PC-9 (cell line): ENCODE measurements at regions of chr22 and their contacts with region 1.

Region 1: DNA sequence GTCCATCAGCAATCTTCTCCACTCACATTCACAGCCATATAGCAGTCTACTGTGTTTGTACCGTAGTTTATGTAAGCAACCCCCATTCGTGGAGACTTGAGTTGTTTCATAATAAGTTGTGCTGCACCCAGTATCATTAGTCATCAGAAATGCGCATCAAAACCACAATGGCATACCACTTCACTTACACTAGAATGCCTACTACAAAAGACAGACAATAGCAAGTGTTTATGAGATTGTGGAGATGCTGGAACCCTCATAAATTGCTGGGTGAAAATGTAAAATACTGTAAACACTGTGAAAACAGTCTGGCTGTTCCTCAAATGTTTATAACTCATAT is 133.3 kb downstream of the ATXN10 start:
- DNase-seq: peak; percentile 55 to 98
- H3K4me3 ChIP-seq: no peak overlapping the region
- H3K27ac ChIP-seq: peak overlapping the region; percentile 55
- H3K4me1 ChIP-seq: peaks cover 30% of the 10 kb centered on the region
- H3K27me3 ChIP-seq: no peaks in the 10 kb centered on the region
- CTCF ChIP-seq: no peak

Region 2: DNA sequence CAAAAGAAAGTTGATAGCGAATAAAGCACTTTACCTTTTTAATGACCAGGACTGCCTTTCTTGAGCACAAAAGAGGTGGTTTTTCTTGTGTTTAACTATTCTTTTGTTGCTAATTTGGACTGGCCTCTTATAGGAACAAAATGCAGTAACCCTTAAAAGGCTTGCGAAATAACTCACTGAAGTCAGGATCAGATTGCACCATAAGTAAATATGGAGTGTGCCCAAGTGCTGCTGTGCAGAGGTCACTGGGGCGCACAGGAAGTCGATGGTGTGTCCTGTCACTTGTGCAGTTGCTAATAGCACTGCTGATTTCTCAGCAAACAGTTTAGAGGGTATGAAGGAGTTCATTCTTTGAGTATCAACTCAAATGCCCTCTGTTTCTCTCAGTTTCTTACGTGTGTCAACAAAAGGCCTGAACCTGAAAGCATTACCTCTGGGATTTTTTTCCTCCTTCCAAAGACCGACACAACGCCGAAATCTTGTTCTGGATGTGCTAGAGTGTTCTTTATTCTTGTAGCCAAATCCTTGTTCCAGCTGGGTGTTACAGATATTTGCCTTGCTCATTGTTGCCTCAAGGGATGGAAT is 62.0 kb before region 1 on chr22:
- CTCF ChIA-PET with region 1: no interaction called
- POLR2A ChIA-PET with region 1: no interaction called
- intact Hi-C with region 1: loop called (anchors 1 kb)
- DNase-seq: peak; percentile 56 to 93
- H3K4me3 ChIP-seq: peak overlapping the region; percentile 8; the same call in 1 of the 2 replicates
- H3K27ac ChIP-seq: peak overlapping the region; percentile 93
- H3K4me1 ChIP-seq: peaks cover 66% of the 10 kb centered on the region
- H3K27me3 ChIP-seq: no peaks in the 10 kb centered on the region
- CTCF ChIP-seq: no peak

Region 3: GRCh38 chr22:45785458-45785857 is 19.5 kb before region 1 on chr22:
- CTCF ChIA-PET with region 1: no interaction called
- POLR2A ChIA-PET with region 1: no interaction called
- intact Hi-C with region 1: loop called (anchors 2 kb)
- DNase-seq: peak; percentile 60 to 95
- H3K4me3 ChIP-seq: no peak overlapping the region
- H3K27ac ChIP-seq: peak overlapping the region; percentile 56
- H3K4me1 ChIP-seq: peaks cover 31% of the 10 kb centered on the region
- H3K27me3 ChIP-seq: no peaks in the 10 kb centered on the region
- CTCF ChIP-seq: no peak

Region 4: GRCh38 chr22:45968751-45969413 is 163.9 kb after region 1 on chr22:
- CTCF ChIA-PET with region 1: no interaction called
- POLR2A ChIA-PET with region 1: no interaction called
- intact Hi-C with region 1: loop called (anchors 1 kb)
- DNase-seq: peak in 1 of 2 experiments; percentile 79
- H3K4me3 ChIP-seq: peak overlapping the region; percentile 38; the same call in 1 of the 2 replicates
- H3K27ac ChIP-seq: peak overlapping the region; percentile 62
- H3K4me1 ChIP-seq: peaks cover 41% of the 10 kb centered on the region
- H3K27me3 ChIP-seq: no peaks in the 10 kb centered on the region
- CTCF ChIP-seq: no peak